ENCODE measurements at regions of chr1 and their contacts with region 1.

Region 1: DNA sequence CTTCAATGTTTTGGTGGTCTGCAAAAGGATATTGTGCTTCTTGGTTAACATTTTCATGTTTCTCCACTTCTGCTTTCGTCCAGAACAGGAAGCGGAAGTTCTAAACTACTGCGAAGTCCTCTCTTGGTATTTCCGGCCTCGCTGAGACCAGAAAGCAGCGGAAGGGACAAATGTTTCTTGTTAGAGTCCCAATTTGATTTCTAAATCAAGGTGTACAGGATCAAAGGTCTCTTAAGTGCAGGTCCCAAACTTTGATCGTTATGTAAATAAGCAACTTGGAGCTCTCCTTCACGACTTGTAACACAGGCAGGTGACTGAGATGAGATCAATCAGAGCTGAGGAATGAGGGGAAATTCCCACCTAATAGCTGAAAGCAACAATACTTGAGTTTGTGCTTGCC is 40.1 kb upstream of the HMCN1 start:
- DNase-seq: peak; percentile 88
- ATAC-seq: peak; percentile 81
- H3K4me3 ChIP-seq: peak overlapping the region; percentile 30 to 67 (median 52)
- H3K4me3 Mint-ChIP-seq: peak overlapping the region; percentile 91
- H3K27ac ChIP-seq: peak overlapping the region; percentile 95 to 96
- H3K27ac Mint-ChIP-seq: peak overlapping the region; percentile 98
- H3K4me1 ChIP-seq: peaks cover 18 to 19% of the 10 kb centered on the region in 2 donors
- H3K4me1 Mint-ChIP-seq: peaks cover 22% of the 10 kb centered on the region
- H3K27me3 ChIP-seq: peaks cover 0 to 2% (median 0%) of the 10 kb centered on the region in 4 experiments
- H3K27me3 Mint-ChIP-seq: peaks cover 25% of the 10 kb centered on the region
- CTCF ChIP-seq: no peak

Region 2: DNA sequence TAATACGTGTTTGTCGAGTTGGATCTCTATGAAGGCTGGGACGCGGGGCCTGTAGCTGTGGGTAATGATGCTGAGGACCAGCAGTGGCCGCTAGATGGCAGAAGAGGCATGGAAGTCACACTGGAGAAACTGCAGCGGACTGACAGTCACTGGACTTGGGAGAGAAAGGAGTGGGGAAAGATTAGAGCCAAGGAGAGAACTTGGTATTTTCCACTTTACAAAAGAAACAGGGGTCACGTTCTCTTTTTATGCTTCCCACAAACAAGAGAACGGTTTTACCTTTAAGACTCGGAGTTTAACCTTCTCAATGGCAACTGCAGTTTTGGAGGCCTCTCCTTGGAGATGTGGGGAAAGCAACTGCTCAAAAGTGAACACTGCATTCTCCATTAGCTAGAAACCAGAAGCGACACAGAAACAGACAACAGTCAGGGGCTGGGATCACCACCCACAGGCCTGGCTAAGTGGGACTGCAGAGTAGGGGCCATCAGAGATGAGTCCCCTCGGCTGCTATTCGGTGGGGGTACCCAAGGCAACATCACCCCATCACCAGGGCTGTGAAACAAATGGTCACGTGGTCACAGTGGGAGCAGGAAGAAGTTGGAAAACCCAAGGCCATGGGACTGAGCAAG is 888.3 kb before region 1 on chr1:
- CTCF ChIA-PET with region 1: interaction called, 28 read pairs
- POLR2A ChIA-PET with region 1: no interaction called
- intact Hi-C with region 1: loop called (anchors 1 kb)
- DNase-seq: peak; percentile 86
- ATAC-seq: peak; percentile 94
- H3K4me3 ChIP-seq: no peak overlapping the region
- H3K4me3 Mint-ChIP-seq: no peak overlapping the region
- H3K27ac ChIP-seq: no peak overlapping the region
- H3K27ac Mint-ChIP-seq: no peak overlapping the region
- H3K4me1 ChIP-seq: peaks cover 0 to 11% of the 10 kb centered on the region in 2 donors
- H3K4me1 Mint-ChIP-seq: peaks cover 9% of the 10 kb centered on the region
- H3K27me3 ChIP-seq: no peaks in the 10 kb centered on the region
- H3K27me3 Mint-ChIP-seq: no peaks in the 10 kb centered on the region
- CTCF ChIP-seq: peak; percentile 97

Region 3: GRCh38 chr1:185044981-185045813 is 648.9 kb before region 1 on chr1 and contains the start of gene RNF2:
- CTCF ChIA-PET with region 1: no interaction called
- POLR2A ChIA-PET with region 1: no interaction called
- intact Hi-C with region 1: loop called (anchors 2 kb)
- DNase-seq: peak; percentile 93
- ATAC-seq: peak; percentile 92
- H3K4me3 ChIP-seq: peak within 1 kb of the TSS; percentile 77 to 96 (median 89)
- H3K4me3 Mint-ChIP-seq: peak within 1 kb of the TSS; percentile 87
- H3K27ac ChIP-seq: peak within 1 kb of the TSS; percentile 72 to 82
- H3K27ac Mint-ChIP-seq: peak within 1 kb of the TSS; percentile 93
- H3K4me1 ChIP-seq: peaks cover 16 to 18% of the 10 kb centered on the region in 2 donors
- H3K4me1 Mint-ChIP-seq: peaks cover 35% of the 10 kb centered on the region
- H3K27me3 ChIP-seq: no peaks in the 10 kb centered on the region
- H3K27me3 Mint-ChIP-seq: no peaks in the 10 kb centered on the region
- CTCF ChIP-seq: no peak
- total RNA-seq, gene RNF2: 24.2 and 29.5 TPM in 2 replicates

Region 4: GRCh38 chr1:185603158-185603557 is 90.9 kb before region 1 on chr1:
- CTCF ChIA-PET with region 1: interaction called, 5 read pairs
- POLR2A ChIA-PET with region 1: no interaction called
- intact Hi-C with region 1: loop called (anchors 2 kb)
- DNase-seq: peak; percentile 86
- ATAC-seq: peak; percentile 93
- H3K4me3 ChIP-seq: peak overlapping the region in 1 of 5 experiments; percentile 42
- H3K4me3 Mint-ChIP-seq: no peak overlapping the region
- H3K27ac ChIP-seq: peak overlapping the region; percentile 27 to 56
- H3K27ac Mint-ChIP-seq: no peak overlapping the region
- H3K4me1 ChIP-seq: peaks cover 54 to 68% of the 10 kb centered on the region in 2 donors
- H3K4me1 Mint-ChIP-seq: peaks cover 31% of the 10 kb centered on the region
- H3K27me3 ChIP-seq: no peaks in the 10 kb centered on the region
- H3K27me3 Mint-ChIP-seq: no peaks in the 10 kb centered on the region
- CTCF ChIP-seq: no peak

Region 5: GRCh38 chr1:185632659-185633423 is 61.2 kb before region 1 on chr1:
- CTCF ChIA-PET with region 1: no interaction called
- POLR2A ChIA-PET with region 1: no interaction called
- intact Hi-C with region 1: no loop called
- DNase-seq: peak; percentile 12
- ATAC-seq: no peak
- H3K4me3 ChIP-seq: no peak overlapping the region
- H3K4me3 Mint-ChIP-seq: no peak overlapping the region
- H3K27ac ChIP-seq: no peak overlapping the region
- H3K27ac Mint-ChIP-seq: no peak overlapping the region
- H3K4me1 ChIP-seq: peaks cover 0 to 9% of the 10 kb centered on the region in 2 donors
- H3K4me1 Mint-ChIP-seq: peaks cover 22% of the 10 kb centered on the region
- H3K27me3 ChIP-seq: no peaks in the 10 kb centered on the region
- H3K27me3 Mint-ChIP-seq: no peaks in the 10 kb centered on the region
- CTCF ChIP-seq: no peak

Region 6: GRCh38 chr1:185670187-185670627 is 23.9 kb before region 1 on chr1:
- CTCF ChIA-PET with region 1: interaction called, 13 read pairs
- POLR2A ChIA-PET with region 1: no interaction called
- intact Hi-C with region 1: loop called (anchors 1 kb)
- DNase-seq: peak; percentile 73
- ATAC-seq: peak; percentile 65
- H3K4me3 ChIP-seq: no peak overlapping the region
- H3K4me3 Mint-ChIP-seq: no peak overlapping the region
- H3K27ac ChIP-seq: no peak overlapping the region
- H3K27ac Mint-ChIP-seq: no peak overlapping the region
- H3K4me1 ChIP-seq: peaks cover 24 to 26% of the 10 kb centered on the region in 2 donors
- H3K4me1 Mint-ChIP-seq: peaks cover 30% of the 10 kb centered on the region
- H3K27me3 ChIP-seq: no peaks in the 10 kb centered on the region
- H3K27me3 Mint-ChIP-seq: no peaks in the 10 kb centered on the region
- CTCF ChIP-seq: peak; percentile 73

Region 7: DNA sequence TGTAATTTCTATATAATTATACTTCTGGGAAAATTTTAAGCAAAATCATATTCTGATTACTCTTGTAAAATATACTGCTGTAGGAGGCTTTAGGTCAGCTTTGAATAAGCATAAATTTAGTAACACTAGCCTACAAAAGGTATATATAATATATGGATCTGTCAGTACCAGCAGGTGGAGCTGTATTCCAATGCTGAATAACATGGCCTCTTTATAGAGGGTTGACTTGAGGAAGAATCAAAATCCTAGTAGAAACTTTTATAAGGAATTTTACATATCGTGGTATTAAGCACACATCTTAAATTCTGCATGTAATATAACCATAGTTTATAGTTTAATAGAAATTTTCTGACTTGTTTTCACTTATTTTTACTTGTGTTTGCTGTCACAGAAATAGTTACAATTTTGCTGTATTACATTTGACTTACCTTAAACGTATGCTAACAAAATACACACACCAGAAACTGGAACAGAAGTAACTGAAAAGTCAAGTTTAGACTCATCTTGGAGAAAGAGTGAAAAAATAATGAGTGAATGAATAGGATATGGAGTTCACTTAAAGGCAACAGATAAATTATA is 119.4 kb after region 1 on chr1:
- CTCF ChIA-PET with region 1: no interaction called
- POLR2A ChIA-PET with region 1: no interaction called
- intact Hi-C with region 1: no loop called
- DNase-seq: peak; percentile 28
- ATAC-seq: no peak
- H3K4me3 ChIP-seq: no peak overlapping the region
- H3K4me3 Mint-ChIP-seq: no peak overlapping the region
- H3K27ac ChIP-seq: no peak overlapping the region
- H3K27ac Mint-ChIP-seq: no peak overlapping the region
- H3K4me1 ChIP-seq: no peaks in the 10 kb centered on the region
- H3K4me1 Mint-ChIP-seq: no peaks in the 10 kb centered on the region
- H3K27me3 ChIP-seq: no peaks in the 10 kb centered on the region
- H3K27me3 Mint-ChIP-seq: peaks cover 3% of the 10 kb centered on the region
- CTCF ChIP-seq: peak; percentile 66